ENCODE measurements at regions of chr3 and their contacts with region 1.

Region 1: DNA sequence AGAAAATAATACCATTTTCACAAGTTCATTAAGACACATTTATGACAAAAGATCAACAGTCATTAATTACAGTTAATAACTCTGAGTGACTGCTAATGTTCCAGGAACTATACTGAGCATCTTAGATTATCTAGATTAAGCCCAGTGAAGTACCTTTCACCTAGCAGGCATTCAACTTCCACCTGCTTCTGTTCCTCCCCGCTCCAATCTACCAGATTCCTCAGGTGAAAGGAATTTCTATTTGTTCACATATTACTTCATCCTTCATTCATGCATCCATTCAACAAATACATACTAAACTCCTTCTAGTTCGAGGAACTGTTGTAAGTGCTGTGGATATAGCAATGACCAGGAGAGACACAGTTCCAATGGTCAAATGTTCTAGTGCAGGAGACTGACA is 139.3 kb downstream of the FILIP1L start:
- DNase-seq: no peak
- ATAC-seq: no peak

Region 2: DNA sequence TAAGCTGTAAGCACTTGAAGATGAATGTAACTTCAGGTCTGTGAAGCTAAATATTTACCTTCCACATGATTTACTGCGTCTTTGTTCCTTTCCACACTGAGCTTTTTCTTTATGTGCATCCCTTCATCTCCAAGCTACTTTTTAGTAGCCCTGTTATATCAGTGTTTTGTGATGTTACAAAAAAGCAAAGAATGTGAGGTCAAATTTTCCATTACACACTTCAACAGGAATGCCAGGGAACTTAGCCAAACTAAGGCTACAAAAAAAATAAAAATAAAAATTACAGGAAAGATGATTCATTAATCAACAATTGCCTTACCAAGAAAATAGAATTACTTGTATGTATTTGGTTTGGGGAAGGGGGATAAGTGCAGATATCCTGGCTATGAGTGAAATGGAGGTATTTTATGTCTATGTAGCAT is 66.4 kb after region 1 on chr3:
- intact Hi-C with region 1: no loop called
- DNase-seq: no peak
- ATAC-seq: peak; percentile 84

Region 3: DNA sequence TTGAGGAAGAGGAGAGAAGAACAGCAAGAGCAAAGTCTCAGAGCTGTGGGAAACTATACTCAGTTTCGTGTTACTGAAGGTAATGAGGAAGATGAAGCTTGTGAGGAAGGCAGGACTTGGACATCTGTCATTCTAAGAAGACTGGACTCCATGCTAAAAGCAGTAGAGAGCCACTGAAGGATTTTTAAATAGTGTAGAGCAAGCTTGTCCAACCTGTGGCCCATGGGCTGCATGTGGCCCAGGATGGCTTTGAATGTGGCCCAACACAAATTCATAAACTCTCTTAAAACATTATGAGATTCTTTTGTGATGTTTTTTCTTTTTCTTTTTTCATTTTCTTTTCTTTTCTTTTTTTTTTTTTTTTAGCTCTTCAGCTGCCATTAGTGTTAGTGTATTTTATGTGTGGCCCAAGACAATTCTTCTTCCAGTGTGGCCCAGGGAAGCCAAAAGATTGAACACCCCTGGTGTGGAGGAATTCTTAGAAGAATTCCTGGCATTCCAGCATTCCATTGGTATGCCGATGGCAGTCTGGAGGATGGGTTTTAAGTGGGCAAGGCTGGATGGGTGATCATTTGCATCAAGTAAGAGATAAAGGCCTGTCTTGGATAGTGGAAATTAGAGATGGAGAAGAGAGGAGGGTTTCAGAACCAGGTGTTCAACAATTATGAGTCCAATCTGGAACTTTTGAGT is 1867.4 kb after region 1 on chr3:
- intact Hi-C with region 1: loop called (anchors 5 kb)
- DNase-seq: no peak
- ATAC-seq: no peak